ENCODE measurements at regions of chr1 and their contacts with region 1.

Region 1: DNA sequence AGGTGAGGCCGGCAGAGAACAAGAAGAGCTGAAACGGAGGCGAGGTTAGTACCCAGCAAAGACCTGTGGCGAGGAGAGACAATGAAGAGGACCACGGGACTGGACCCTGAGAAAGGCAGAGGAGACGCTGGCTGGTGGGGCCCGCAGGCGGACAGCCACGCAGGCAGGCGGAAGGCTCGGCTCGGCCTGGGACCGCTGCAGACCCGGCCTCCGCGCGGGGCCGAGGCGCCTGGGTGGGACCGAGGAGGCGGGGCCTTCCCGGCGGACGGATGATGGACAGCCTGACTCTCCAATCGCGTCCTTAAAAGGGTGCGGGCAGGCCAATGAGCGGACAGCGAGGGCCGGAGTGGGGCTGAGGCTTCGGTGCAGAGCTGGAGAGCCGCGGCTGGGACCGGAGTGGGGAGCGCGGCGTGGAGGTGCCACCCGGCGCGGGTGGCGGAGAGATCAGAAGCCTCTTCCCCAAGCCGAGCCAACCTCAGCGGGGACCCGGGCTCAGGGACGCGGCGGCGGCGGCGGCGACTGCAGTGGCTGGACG is at the start of gene MPZL1:
- DNase-seq: peak; percentile 92
- ATAC-seq: peak; percentile 96
- H3K4me3 ChIP-seq: peak within 1 kb of the TSS; percentile 89
- H3K27ac ChIP-seq: peak within 1 kb of the TSS; percentile 98
- H3K4me1 ChIP-seq: peaks cover 10% of the 10 kb centered on the region
- H3K27me3 ChIP-seq: no peaks in the 10 kb centered on the region
- CTCF ChIP-seq: no peak
- POLR2A ChIP-seq: peak; percentile 22
- RAD21 ChIP-seq: no peak
- total RNA-seq, gene MPZL1: 81.7 and 87.3 TPM in 2 replicates

Region 2: GRCh38 chr1:167553136-167554027 is 168.3 kb before region 1 on chr1 and contains the start of gene CREG1:
- CTCF ChIA-PET with region 1: no interaction called
- POLR2A ChIA-PET with region 1: no interaction called
- dilution Hi-C with region 1: no loop called
- in situ Hi-C with region 1: no loop called
- intact Hi-C with region 1: no loop called
- DNase-seq: peak; percentile 78
- ATAC-seq: peak; percentile 100
- H3K4me3 ChIP-seq: peak within 1 kb of the TSS; percentile 80
- H3K27ac ChIP-seq: no peak within 1 kb of the TSS
- H3K4me1 ChIP-seq: peaks cover 4% of the 10 kb centered on the region; the same call in 1 of the 2 replicates
- H3K27me3 ChIP-seq: peaks cover 3% of the 10 kb centered on the region
- CTCF ChIP-seq: no peak
- POLR2A ChIP-seq: no peak
- RAD21 ChIP-seq: no peak
- total RNA-seq, gene CREG1: 2.9 and 3.3 TPM in 2 replicates

Region 3: DNA sequence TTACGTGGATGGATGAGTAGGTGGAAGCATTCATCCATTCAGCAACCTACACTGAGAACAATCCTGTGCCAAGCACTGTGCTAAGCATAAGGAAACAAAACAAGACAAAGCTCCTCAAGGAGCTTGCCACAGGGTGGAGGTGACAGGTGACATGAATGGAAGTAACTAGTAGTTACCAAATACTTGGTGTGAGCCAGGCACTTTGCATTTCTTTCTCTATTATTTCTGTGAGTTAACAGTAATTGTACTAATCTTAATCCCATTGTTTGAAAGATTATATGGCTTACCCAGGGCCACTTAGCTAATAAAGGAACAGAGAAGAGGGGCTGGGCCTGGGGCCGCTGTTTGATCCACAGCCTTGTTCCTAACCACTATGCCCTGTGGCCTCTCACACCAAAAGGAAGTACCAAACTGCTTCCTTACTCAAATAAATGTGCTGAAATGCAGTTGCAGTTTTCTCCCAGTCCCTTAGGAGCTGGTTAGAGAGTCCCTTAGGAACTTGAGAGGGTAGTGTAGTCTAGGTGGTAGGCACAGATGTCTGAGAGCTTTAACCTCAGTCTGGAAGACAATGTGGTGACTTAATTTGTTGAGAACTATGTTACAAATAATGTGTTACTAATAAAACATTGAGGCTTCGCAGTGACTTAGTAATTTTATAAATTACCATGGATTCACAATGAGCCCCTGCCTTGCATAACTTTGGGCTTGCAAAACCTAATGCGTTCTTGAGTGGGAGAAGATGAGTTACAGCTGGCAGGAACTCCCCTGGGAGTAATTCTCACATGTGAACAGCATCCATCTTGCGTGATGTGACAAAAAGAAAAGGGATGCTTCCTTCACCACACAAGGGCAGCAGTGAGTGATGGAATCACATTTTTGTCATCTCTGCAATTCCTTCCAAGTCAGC is 69.8 kb after region 1 on chr1:
- CTCF ChIA-PET with region 1: interaction called, 3 read pairs
- POLR2A ChIA-PET with region 1: no interaction called
- dilution Hi-C with region 1: no loop called
- in situ Hi-C with region 1: loop called (anchors 5 kb)
- intact Hi-C with region 1: loop called (anchors 1 kb)
- DNase-seq: peak; percentile 99
- ATAC-seq: peak; percentile 83
- H3K4me3 ChIP-seq: no peak overlapping the region
- H3K27ac ChIP-seq: peak overlapping the region; percentile 58
- H3K4me1 ChIP-seq: peaks cover 18% of the 10 kb centered on the region
- H3K27me3 ChIP-seq: no peaks in the 10 kb centered on the region
- CTCF ChIP-seq: peak; percentile 22; the same call in 1 of the 2 replicates
- POLR2A ChIP-seq: no peak
- RAD21 ChIP-seq: peak; percentile 15; the same call in 1 of the 2 replicates

Region 4: DNA sequence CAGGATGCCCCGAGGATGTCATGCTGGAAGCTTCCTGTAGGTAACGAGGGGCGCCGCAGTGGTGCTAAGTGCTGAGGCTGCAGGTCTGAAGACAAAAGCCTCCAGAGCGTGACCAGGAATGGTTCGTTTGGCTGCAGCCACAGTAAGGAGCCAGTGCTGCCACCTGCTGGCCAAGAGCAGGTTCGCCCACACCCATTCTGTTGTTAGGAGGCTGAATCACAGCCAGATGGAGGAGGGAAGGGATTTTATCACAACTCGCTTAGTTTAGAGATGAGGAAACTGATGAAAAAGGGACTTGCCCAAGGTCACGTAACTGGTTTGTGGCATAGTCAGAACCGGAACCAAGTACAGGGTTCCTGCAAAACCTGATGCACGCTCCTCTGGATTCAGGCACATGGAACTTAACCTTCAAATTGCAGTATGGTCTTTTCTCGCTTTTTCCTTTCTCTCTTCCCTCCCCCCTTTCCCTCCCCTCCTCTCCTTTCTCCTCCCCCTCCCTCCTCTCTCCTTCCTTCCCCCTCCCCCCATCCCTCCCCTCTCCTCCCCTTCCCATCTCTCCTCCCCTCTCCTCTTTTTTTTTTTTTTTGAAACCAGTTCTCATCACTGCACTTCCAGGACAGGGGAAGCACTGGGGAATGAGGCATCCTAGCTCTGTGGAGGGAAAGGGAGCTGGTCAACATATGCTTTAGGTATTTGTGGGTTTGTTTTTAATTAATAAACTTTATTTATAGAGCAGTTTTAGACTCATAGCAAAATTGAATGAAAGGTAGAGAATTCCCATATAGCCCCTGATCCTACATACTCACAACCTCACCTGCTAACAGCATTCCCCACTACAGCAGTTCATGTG is 81.9 kb after region 1 on chr1:
- CTCF ChIA-PET with region 1: interaction called, 6 read pairs
- POLR2A ChIA-PET with region 1: no interaction called
- dilution Hi-C with region 1: no loop called
- in situ Hi-C with region 1: loop called (anchors 5 kb)
- intact Hi-C with region 1: loop called (anchors 2 kb)
- DNase-seq: peak; percentile 95
- ATAC-seq: peak; percentile 89
- H3K4me3 ChIP-seq: no peak overlapping the region
- H3K27ac ChIP-seq: no peak overlapping the region
- H3K4me1 ChIP-seq: peaks cover 9% of the 10 kb centered on the region
- H3K27me3 ChIP-seq: no peaks in the 10 kb centered on the region
- CTCF ChIP-seq: peak; percentile 98
- POLR2A ChIP-seq: no peak
- RAD21 ChIP-seq: peak; percentile 89

Region 5: GRCh38 chr1:167829868-167830267 is 108.2 kb after region 1 on chr1:
- CTCF ChIA-PET with region 1: no interaction called
- POLR2A ChIA-PET with region 1: no interaction called
- dilution Hi-C with region 1: no loop called
- in situ Hi-C with region 1: no loop called
- intact Hi-C with region 1: no loop called
- DNase-seq: no peak
- ATAC-seq: no peak
- H3K4me3 ChIP-seq: no peak overlapping the region
- H3K27ac ChIP-seq: no peak overlapping the region
- H3K4me1 ChIP-seq: peaks cover 2% of the 10 kb centered on the region; the same call in 1 of the 2 replicates
- H3K27me3 ChIP-seq: no peaks in the 10 kb centered on the region
- CTCF ChIP-seq: no peak
- POLR2A ChIP-seq: no peak
- RAD21 ChIP-seq: no peak

Region 6: DNA sequence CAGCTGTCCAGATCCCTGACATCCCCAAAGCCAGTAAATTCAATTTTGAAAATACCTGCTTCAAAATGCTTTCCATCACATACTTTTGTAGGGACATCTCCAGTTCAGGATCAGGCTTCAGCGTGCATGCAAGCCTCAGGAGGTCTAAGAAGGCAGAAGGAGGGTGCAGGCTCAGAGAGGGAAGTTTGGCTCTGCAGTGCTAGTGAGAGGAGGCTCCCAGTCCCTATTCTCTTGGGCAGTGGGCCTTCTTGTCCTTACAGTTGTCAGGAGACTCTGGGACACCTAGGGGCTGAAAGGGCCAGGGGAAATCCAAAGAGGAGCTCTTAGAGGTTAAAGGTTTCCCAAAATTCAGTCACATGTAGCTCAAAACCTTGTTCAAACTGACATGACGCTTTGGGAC is 172.1 kb after region 1 on chr1:
- CTCF ChIA-PET with region 1: no interaction called
- POLR2A ChIA-PET with region 1: no interaction called
- dilution Hi-C with region 1: no loop called
- in situ Hi-C with region 1: no loop called
- intact Hi-C with region 1: no loop called
- DNase-seq: no peak
- ATAC-seq: no peak
- H3K4me3 ChIP-seq: no peak overlapping the region
- H3K27ac ChIP-seq: no peak overlapping the region
- H3K4me1 ChIP-seq: no peaks in the 10 kb centered on the region; the same call in 1 of the 2 replicates
- H3K27me3 ChIP-seq: no peaks in the 10 kb centered on the region
- CTCF ChIP-seq: no peak
- POLR2A ChIP-seq: no peak
- RAD21 ChIP-seq: no peak

Region 7: DNA sequence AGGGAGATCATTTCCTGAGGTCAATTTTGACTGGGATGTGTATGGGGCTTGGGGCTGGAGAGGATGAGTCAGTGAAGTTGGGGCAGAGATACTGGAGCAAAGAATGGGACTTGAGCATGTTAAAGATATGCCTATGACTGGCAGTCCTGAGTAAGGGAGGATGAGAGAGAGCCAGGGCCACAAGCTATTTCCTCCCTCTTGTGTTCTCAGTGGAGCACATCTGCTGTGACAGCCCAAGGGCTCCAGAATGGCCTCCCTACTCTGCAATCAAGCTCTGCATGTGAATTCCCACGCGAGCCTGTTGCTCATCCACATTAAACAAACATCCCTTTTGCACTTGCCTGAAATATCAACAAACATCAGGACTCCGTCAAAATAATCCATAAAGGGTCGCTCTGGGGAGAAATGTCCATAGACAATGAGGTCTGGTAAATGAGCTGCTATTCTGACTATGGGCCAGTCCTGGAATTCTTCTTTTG is 183.0 kb after region 1 on chr1:
- CTCF ChIA-PET with region 1: no interaction called
- POLR2A ChIA-PET with region 1: no interaction called
- dilution Hi-C with region 1: no loop called
- in situ Hi-C with region 1: no loop called
- intact Hi-C with region 1: no loop called
- DNase-seq: peak; percentile 93
- ATAC-seq: peak; percentile 94
- H3K4me3 ChIP-seq: no peak overlapping the region
- H3K27ac ChIP-seq: peak overlapping the region; percentile 36; the same call in 1 of the 2 replicates
- H3K4me1 ChIP-seq: peaks cover 11% of the 10 kb centered on the region
- H3K27me3 ChIP-seq: no peaks in the 10 kb centered on the region
- CTCF ChIP-seq: 0 out of 2 replicates have a peak, but pooled peaks have one; percentile 21
- POLR2A ChIP-seq: no peak
- RAD21 ChIP-seq: peak; percentile 41

Region 8: DNA sequence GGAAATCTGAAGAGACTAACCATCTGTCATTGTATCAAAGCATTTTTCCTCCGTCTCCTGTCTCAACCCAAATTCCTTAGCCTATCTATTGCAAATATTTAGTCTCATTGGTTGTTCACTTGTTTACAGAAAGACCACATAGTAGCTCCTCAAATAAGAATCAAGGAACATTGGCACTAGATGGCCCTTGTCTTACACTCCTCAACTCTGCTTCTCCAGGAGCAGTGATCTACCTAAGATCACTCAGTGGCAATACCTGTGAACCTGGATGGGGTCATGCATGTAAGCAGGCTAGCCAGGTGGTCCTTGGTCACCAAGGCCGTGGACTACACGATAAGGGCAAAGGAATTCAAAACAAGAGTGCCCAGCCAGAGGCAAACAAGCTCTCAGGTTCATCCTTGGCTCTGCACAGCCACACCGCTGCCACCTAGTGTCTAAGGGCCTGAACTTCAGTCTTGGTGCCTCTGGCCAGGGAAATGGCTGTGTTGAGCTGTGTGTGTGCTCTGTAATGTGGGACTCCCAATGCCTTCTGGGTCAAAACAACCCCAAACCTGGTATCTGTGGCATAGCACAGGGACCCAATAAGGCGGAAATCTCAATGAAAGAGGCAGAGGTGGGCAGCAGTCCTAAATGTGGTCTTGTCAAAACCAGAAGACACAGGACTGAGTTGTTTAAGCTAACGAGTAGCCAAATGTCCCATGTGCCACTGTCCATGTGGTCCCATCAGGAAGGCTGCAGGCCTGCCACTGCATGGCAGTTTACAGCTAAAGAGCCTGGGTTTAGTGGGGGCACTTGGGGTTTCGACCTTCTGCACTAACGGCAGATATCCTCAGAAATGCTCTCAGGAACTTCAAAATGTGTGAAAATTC is 360.6 kb after region 1 on chr1:
- CTCF ChIA-PET with region 1: interaction called, 4 read pairs
- POLR2A ChIA-PET with region 1: no interaction called
- dilution Hi-C with region 1: no loop called
- in situ Hi-C with region 1: loop called (anchors 10 kb)
- intact Hi-C with region 1: loop called (anchors 1 kb)
- DNase-seq: peak; percentile 79
- ATAC-seq: peak; percentile 89
- H3K4me3 ChIP-seq: no peak overlapping the region
- H3K27ac ChIP-seq: no peak overlapping the region
- H3K4me1 ChIP-seq: peaks cover 9% of the 10 kb centered on the region; the same call in 1 of the 2 replicates
- H3K27me3 ChIP-seq: no peaks in the 10 kb centered on the region
- CTCF ChIP-seq: peak; percentile 83
- POLR2A ChIP-seq: no peak
- RAD21 ChIP-seq: peak; percentile 78